PC-9 (cell line): ENCODE measurements at regions of chr1 and their contacts with region 1.

Region 1: DNA sequence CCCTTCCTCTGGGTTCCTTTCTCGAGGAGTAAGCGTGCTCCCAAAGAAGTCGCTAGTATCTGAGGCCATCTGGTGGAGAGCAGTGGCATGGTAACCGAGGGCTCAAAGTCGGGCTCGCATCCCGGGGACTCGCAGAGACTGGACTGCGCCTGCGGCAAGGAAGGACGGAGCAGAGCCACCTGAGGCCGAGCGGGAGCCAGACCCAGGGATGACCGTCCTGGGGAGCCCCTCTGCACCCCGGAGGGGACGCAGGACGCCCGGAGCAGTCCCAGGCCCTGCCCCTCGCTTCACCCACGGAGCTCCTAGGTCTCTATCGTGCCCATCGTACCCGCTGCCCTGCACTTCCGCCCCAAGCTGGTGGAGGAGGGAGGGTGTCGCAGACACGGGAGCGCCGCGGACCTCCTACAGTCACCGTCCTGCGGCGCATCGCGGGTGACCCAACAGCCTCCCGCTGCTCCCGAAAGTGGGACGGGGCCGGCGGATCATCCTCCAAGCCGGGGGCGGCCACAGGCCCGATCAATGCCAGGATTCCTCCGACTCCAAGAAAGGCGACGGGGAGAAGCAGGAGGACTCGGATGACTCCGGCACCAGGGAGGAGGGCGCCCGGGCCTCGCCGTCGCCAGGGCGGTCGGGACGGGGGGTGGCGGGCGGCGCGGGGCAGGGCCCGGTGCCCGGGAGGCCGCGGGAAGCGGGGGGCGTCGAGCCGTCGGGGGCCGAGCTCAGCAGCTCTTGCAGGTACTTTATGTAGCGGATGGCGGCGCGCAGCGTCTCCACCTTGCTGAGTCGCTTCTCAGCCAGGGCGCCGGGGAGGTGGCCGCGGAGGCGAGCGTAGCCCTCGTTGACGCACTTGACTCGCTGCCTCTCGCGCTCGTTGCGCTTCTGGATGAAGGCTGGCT is 2.3 kb upstream of the CACNA1S start:
- DNase-seq: peak; percentile 90 to 94
- H3K4me3 ChIP-seq: peak overlapping the region; percentile 60
- H3K27ac ChIP-seq: no peak overlapping the region
- H3K4me1 ChIP-seq: no peaks in the 10 kb centered on the region; the same call in 1 of the 2 replicates
- H3K27me3 ChIP-seq: no peaks in the 10 kb centered on the region; the same call in 1 of the 2 replicates
- CTCF ChIP-seq: peak; percentile 88

Region 2: GRCh38 chr1:200558866-200559459 is 555.5 kb before region 1 on chr1:
- CTCF ChIA-PET with region 1: no interaction called
- POLR2A ChIA-PET with region 1: no interaction called
- intact Hi-C with region 1: loop called (anchors 10 kb)
- DNase-seq: peak in 1 of 2 experiments; percentile 43
- H3K4me3 ChIP-seq: no peak overlapping the region
- H3K27ac ChIP-seq: no peak overlapping the region
- H3K4me1 ChIP-seq: no peaks in the 10 kb centered on the region
- H3K27me3 ChIP-seq: no peaks in the 10 kb centered on the region
- CTCF ChIP-seq: peak; percentile 71

Region 3: DNA sequence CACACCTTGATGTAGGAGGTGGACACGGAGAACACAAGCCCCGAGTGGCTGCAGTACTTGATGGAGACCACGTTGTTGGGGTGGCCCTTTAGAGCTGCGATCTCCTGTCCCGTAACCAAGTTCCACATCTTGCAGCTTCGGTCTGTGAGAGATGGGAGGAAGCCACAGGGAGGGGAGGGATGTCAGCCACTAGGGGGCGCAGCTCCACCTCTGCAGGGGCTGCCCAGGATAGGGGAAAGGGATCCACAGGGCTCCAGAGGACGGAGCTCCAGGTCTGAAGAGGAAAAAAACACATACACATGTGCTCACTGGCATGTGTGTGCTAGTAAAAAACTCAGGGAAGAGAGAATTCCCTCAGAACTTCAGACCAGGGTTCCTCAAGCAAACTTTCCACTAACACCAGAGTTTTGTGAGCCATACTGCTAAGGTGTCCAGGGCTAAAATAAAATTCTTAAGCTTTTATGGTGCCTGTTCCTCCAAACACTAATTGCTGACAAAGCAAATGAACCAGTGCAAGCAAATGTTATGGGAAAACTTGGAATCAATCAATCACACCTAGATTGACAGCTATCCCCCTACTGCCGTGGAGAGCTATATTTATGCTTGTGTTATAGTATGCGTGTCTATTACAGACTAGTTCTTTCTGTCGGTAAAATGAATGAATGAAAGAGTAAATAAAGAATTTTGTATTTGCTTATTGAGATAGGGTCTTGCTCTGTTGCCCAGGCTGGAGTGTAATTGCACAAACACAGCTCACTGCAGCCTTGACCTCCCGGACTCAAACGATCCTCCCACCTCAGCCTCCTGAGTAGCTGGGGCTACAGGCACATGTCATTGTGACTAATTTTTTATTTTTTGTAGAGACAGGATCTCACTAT is 134.7 kb before region 1 on chr1:
- CTCF ChIA-PET with region 1: interaction called, 8 read pairs
- POLR2A ChIA-PET with region 1: no interaction called
- intact Hi-C with region 1: loop called (anchors 1 kb)
- DNase-seq: peak; percentile 47 to 52
- H3K4me3 ChIP-seq: no peak overlapping the region
- H3K27ac ChIP-seq: no peak overlapping the region
- H3K4me1 ChIP-seq: no peaks in the 10 kb centered on the region
- H3K27me3 ChIP-seq: no peaks in the 10 kb centered on the region
- CTCF ChIP-seq: peak; percentile 91

Region 4: GRCh38 chr1:201080135-201080534 is 34.3 kb before region 1 on chr1:
- CTCF ChIA-PET with region 1: interaction called, 18 read pairs
- POLR2A ChIA-PET with region 1: interaction called, 3 read pairs
- intact Hi-C with region 1: no loop called
- DNase-seq: no peak
- H3K4me3 ChIP-seq: no peak overlapping the region
- H3K27ac ChIP-seq: no peak overlapping the region
- H3K4me1 ChIP-seq: no peaks in the 10 kb centered on the region
- H3K27me3 ChIP-seq: peaks cover 57% of the 10 kb centered on the region
- CTCF ChIP-seq: no peak

Region 5: GRCh38 chr1:201184307-201185122 is 70.0 kb after region 1 on chr1:
- CTCF ChIA-PET with region 1: no interaction called
- POLR2A ChIA-PET with region 1: no interaction called
- intact Hi-C with region 1: loop called (anchors 1 kb)
- DNase-seq: peak; percentile 44 to 59
- H3K4me3 ChIP-seq: no peak overlapping the region
- H3K27ac ChIP-seq: no peak overlapping the region
- H3K4me1 ChIP-seq: no peaks in the 10 kb centered on the region
- H3K27me3 ChIP-seq: no peaks in the 10 kb centered on the region
- CTCF ChIP-seq: peak; percentile 69